ENCODE measurements at regions of chr3 and their contacts with region 1.

Region 1: DNA sequence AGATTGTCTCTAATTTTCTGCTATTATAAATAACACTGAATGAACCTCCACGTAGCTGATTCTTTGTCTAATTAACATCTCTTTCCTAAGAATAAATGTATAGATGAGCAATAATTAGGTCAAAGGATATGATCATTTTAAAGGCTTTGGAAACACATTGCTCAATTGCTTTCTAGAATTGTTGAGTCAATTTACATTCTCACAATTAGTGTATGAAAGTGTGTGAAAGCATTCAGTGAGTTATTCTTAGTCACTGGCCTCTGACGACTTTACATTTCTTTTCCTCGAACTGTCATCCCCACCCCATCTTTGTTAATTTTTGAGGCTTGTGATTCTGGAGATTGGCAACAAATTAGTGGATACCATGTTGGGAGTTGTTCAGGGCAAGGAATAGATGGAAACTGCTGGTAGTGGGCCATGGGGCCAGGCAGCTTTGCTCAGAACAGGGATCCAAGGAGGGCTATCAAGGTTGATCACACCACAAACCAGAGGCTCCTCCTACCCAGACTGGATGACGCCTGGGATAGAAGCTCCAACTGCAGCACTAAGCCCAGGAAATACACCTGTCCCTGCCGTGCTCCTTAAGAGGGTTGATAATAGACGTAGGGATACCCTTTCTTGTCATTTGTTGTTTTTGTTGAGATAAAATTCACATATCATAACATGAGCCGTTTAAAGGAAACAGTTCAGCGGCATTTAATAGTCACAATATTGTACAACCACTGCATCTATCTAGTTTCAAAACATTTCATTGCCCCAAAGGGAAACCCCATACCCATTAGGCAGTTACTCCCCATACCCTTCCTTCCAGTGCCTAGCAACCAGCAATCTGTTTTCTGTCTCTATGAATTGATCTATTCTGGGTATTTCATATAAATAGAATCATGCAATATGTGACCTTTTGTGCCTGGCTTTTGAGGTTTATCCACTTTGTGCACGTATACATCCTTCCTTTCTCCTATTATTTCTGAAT is 27.9 kb downstream of the EIF1B start:
- ATAC-seq: peak in 2 of 8 experiments; percentile 56 to 58
- H3K4me3 ChIP-seq: no peak overlapping the region
- H3K27ac ChIP-seq: no peak overlapping the region
- H3K4me1 ChIP-seq: no peaks in the 10 kb centered on the region

Region 2: DNA sequence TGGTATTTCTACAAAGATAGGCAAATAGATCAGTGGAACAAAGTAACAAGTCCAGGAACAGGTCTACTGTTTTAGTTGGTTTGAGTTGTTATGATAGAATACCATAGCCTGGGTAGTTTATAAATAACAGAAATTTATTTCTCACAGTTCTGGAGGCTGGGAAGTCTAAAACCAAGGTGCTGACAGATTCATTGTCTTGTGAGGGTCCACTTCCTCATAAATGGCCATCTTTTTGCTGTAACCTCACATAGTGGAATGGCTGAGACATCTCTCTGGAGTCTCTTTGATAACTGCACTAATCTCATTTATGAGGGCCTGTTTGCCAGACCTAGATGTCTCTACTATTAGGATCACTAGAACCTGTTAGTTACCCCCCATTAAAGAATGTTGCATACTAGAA is 680.3 kb before region 1 on chr3:
- in situ Hi-C with region 1: no loop called
- ATAC-seq: no peak
- H3K4me3 ChIP-seq: no peak overlapping the region
- H3K27ac ChIP-seq: no peak overlapping the region
- H3K4me1 ChIP-seq: no peaks in the 10 kb centered on the region

Region 3: DNA sequence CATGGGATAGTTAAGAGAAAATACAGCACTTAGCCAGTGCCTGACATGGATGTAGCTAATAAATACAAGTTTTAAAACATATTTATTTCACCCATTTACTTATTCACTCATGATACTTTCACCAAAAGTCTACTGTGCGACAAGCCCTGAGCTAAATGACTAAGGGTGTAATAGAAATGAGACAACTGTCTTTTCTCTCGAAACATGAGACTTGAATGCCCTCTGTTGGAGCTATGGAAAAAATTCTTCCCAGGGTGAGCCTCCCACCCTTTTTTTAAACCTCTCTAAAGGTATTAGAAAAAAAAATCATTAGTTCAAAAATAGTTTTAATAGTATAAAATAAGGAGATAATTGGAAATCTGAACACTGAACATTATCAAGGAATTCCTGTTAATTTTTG is 95.4 kb after region 1 on chr3:
- in situ Hi-C with region 1: loop called in 1 of 9 experiments (anchors 25 kb)
- ATAC-seq: no peak
- H3K4me3 ChIP-seq: no peak overlapping the region
- H3K27ac ChIP-seq: no peak overlapping the region
- H3K4me1 ChIP-seq: no peaks in the 10 kb centered on the region

Region 4: GRCh38 chr3:40574661-40575060 is 237.2 kb after region 1 on chr3:
- in situ Hi-C with region 1: loop called in 1 of 9 experiments (anchors 25 kb)
- ATAC-seq: peak in 1 of 8 experiments; percentile 18
- H3K4me3 ChIP-seq: no peak overlapping the region
- H3K27ac ChIP-seq: no peak overlapping the region
- H3K4me1 ChIP-seq: peaks cover 7 to 10% of the 10 kb centered on the region in 2 donors

Region 5: DNA sequence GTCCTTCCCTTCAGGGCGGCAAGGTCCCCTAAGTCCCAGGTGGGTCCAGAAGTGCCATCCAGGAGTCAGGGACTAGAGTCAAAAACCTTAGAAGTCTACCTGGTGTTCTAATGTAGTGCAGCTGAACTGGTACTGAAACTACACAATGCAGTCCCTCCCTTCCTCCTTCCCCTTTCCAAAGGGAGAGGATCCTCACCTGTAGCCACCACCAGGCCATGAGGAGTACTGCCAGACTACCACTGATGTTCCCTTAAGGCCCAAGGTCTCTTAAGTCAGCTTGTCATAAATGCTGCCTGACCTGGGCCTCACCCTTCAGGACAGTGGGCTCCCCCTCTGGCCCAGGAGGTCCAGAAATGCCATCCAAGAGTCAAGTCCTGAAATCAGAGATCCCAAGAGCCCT is 1525.6 kb after region 1 on chr3:
- in situ Hi-C with region 1: loop called in 2 of 9 experiments (anchors 25 kb)
- ATAC-seq: no peak
- H3K4me3 ChIP-seq: no peak overlapping the region
- H3K27ac ChIP-seq: no peak overlapping the region
- H3K4me1 ChIP-seq: no peaks in the 10 kb centered on the region

Region 6: GRCh38 chr3:41881233-41881821 is 1543.9 kb after region 1 on chr3:
- in situ Hi-C with region 1: loop called in 2 of 9 experiments (anchors 25 kb)
- ATAC-seq: no peak
- H3K4me3 ChIP-seq: no peak overlapping the region
- H3K27ac ChIP-seq: no peak overlapping the region
- H3K4me1 ChIP-seq: no peaks in the 10 kb centered on the region